K562 (cell line): ENCODE measurements at regions of chr5 and their contacts with region 1.

Region 1: GRCh38 chr5:108727651-108728565 is 19.8 kb upstream of the FER start:
- DNase-seq: peak; percentile 91 to 95 (median 93)
- ATAC-seq: peak; percentile 98
- H3K4me3 ChIP-seq: peak overlapping the region; percentile 56
- H3K27ac ChIP-seq: peak overlapping the region; percentile 90
- H3K4me1 ChIP-seq: peaks cover 0 to 8% of the 10 kb centered on the region in 2 experiments; a peak in 2 of 5 replicates
- H3K27me3 ChIP-seq: no peaks in the 10 kb centered on the region
- CTCF ChIP-seq: no peak
- EP300 ChIP-seq: peak; percentile 33
- POLR2A ChIP-seq: peak; percentile 92
- RAD21 ChIP-seq: peak; percentile 16 to 18; a peak in 1 of 4 replicates

Region 2: GRCh38 chr5:108381954-108382783 is 345.7 kb before region 1 on chr5 and contains the start of gene FBXL17:
- CTCF ChIA-PET with region 1: no interaction called
- POLR2A ChIA-PET with region 1: interaction called, 3 read pairs
- in situ Hi-C with region 1: no loop called
- intact Hi-C with region 1: loop called (anchors 10 kb)
- DNase-seq: peak; percentile 87 to 96 (median 90)
- ATAC-seq: peak; percentile 88
- H3K4me3 ChIP-seq: peak within 1 kb of the TSS; percentile 78
- H3K27ac ChIP-seq: peak within 1 kb of the TSS; percentile 96
- H3K4me1 ChIP-seq: peaks cover 9 to 19% of the 10 kb centered on the region in 2 experiments
- H3K27me3 ChIP-seq: no peaks in the 10 kb centered on the region
- CTCF ChIP-seq: no peak
- EP300 ChIP-seq: peak; percentile 60; the same call in 1 of the 2 replicates
- POLR2A ChIP-seq: peak; percentile 83
- RAD21 ChIP-seq: no peak
- polyA plus RNA-seq, gene FBXL17: 0.32 to 0.48 TPM

Region 3: DNA sequence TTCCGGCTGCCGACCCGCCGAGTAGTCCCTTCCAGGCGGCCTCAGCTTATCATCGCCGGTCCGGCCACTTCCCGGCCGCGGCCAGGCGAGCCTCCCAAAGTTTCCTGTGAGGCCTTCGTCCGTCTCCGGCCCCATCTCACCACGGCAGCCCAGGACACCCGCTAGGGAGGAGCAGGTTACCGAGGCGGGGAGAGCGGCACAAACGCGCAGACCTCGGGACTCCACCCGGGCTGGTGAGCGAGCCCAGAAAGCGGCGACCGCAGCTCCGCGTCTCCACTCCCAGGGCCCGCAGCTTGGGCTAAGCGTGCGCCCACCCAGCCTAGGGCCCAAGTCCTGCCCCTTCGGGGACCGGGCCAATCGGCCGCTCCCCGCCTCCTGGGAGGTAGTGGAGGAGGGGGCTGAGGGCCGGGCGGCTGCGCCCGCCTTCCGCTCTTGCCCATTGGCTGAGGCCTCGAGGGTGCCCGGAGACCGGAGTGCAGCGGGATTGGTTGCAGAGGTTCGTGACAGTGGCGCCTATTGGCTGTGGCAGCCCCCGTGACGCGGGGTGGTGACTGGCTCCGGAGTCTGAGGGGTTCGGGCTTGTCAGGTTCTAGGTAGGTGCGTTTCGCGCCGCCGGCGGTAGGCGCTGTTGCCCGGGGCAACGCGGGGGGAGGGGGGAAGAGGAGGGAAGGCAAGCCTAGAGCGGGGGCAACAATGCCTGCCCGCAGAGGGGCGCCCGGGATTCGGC is 20.7 kb after region 1 on chr5:
- CTCF ChIA-PET with region 1: interaction called, 4 read pairs
- POLR2A ChIA-PET with region 1: interaction called, 49 read pairs
- in situ Hi-C with region 1: no loop called
- intact Hi-C with region 1: loop called (anchors 1 kb)
- DNase-seq: peak; percentile 96 to 99 (median 98)
- ATAC-seq: peak; percentile 97
- H3K4me3 ChIP-seq: peak overlapping the region; percentile 67
- H3K27ac ChIP-seq: peak overlapping the region; percentile 89
- H3K4me1 ChIP-seq: peaks cover 0 to 12% of the 10 kb centered on the region in 2 experiments; a peak in 1 of 5 replicates
- H3K27me3 ChIP-seq: no peaks in the 10 kb centered on the region
- CTCF ChIP-seq: peak in 1 of 3 experiments; percentile 38; a peak in 2 of 6 replicates
- EP300 ChIP-seq: no peak
- POLR2A ChIP-seq: peak; percentile 99
- RAD21 ChIP-seq: peak in 1 of 2 experiments; percentile 15; a peak in 2 of 4 replicates

Region 4: DNA sequence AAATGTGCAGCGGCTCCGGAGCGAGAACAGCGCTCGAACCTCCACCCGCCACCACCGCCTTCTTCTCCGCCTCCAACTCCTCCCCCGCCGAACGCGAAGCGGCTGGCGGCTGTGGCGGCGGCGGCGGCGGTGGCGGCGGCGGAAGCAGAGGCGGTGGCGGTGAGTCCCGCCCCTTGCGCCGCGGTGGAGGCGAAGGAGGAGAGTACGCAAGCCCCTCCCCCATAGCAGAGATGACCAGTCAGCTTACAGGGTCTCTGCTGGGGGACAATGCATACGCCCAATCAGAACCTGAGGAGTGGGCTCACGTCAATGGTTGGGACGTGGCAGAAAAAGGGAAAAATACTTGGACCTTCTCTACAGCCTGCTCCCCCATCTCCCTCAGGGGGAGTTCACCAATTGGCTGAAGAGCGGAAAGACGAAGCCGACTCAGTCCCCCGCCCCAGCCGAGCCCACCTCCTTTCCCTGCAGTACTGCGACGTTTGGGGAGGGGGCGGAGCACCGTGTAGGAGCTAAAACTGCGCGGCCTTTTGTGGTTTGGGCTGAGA is 682.0 kb after region 1 on chr5 and contains the start of gene PJA2:
- CTCF ChIA-PET with region 1: no interaction called
- POLR2A ChIA-PET with region 1: interaction called, 3 read pairs
- in situ Hi-C with region 1: no loop called
- intact Hi-C with region 1: loop called (anchors 5 kb)
- DNase-seq: peak; percentile 94 to 98 (median 96)
- ATAC-seq: peak; percentile 87
- H3K4me3 ChIP-seq: peak within 1 kb of the TSS; percentile 85
- H3K27ac ChIP-seq: peak within 1 kb of the TSS; percentile 99
- H3K4me1 ChIP-seq: peaks cover 3 to 12% of the 10 kb centered on the region in 2 experiments; a peak in 4 of 5 replicates
- H3K27me3 ChIP-seq: no peaks in the 10 kb centered on the region
- CTCF ChIP-seq: peak; percentile 28 to 33 (median 31); a peak in 4 of 6 replicates
- EP300 ChIP-seq: no peak; the same call in 1 of the 2 replicates
- POLR2A ChIP-seq: no peak
- RAD21 ChIP-seq: peak; percentile 12 to 19; a peak in 2 of 4 replicates
- polyA plus RNA-seq, gene PJA2: 31.2 to 50.1 TPM